T-cell (primary cell): ENCODE measurements at regions of chr18 and their contacts with region 1.

Region 1: GRCh38 chr18:63518178-63519012 is 23.8 kb upstream of the SERPINB12 start:
- DNase-seq: peak in 28 of 35 experiments; percentile 0 to 80 (median 32)
- ATAC-seq: peak; percentile 48 to 73 (median 65)
- H3K4me3 ChIP-seq: no peak overlapping the region
- H3K4me3 Mint-ChIP-seq: no peak overlapping the region
- H3K27ac ChIP-seq: no peak overlapping the region
- H3K27ac Mint-ChIP-seq: no peak overlapping the region
- H3K4me1 ChIP-seq: no peaks in the 10 kb centered on the region
- H3K4me1 Mint-ChIP-seq: peaks cover 2 to 6% (median 3%) of the 10 kb centered on the region in 3 donors
- H3K27me3 ChIP-seq: peaks cover 0 to 2% of the 10 kb centered on the region in 2 experiments
- H3K27me3 Mint-ChIP-seq: peaks cover 21 to 24% of the 10 kb centered on the region in 2 donors

Region 2: GRCh38 chr18:63487676-63488075 is 30.7 kb before region 1 on chr18:
- CTCF ChIA-PET with region 1: interaction called in 1 of 2 experiments, 11 read pairs
- POLR2A ChIA-PET with region 1: no interaction called
- DNase-seq: no peak
- ATAC-seq: no peak
- H3K4me3 ChIP-seq: no peak overlapping the region
- H3K4me3 Mint-ChIP-seq: no peak overlapping the region
- H3K27ac ChIP-seq: no peak overlapping the region
- H3K27ac Mint-ChIP-seq: no peak overlapping the region
- H3K4me1 ChIP-seq: no peaks in the 10 kb centered on the region
- H3K4me1 Mint-ChIP-seq: no peaks in the 10 kb centered on the region
- H3K27me3 ChIP-seq: peaks cover 0 to 3% of the 10 kb centered on the region in 2 experiments
- H3K27me3 Mint-ChIP-seq: peaks cover 8 to 10% of the 10 kb centered on the region in 2 donors

Region 3: DNA sequence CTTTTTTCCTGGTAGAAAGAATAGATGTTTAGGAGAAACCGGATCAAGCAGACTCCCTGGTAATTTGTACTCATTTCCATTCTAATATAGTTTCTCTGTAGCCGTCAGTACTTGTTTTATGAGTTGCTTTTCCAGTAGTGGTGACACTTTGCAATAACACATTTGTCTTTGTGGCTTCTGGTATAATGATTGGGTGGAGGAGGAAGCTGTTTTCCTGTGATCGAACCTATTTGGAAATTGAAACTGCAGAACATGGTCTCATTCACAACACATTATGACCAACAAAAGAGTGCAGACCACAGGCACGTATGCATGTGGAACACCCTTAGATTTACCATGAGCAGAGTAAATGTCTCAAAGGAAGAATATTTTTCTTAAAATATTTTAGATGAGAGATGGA is 16.2 kb after region 1 on chr18:
- CTCF ChIA-PET with region 1: interaction called in 1 of 2 experiments, 6 read pairs
- POLR2A ChIA-PET with region 1: interaction called in 1 of 2 experiments, 11 read pairs
- DNase-seq: no peak
- ATAC-seq: no peak
- H3K4me3 ChIP-seq: no peak overlapping the region
- H3K4me3 Mint-ChIP-seq: no peak overlapping the region
- H3K27ac ChIP-seq: no peak overlapping the region
- H3K27ac Mint-ChIP-seq: no peak overlapping the region
- H3K4me1 ChIP-seq: no peaks in the 10 kb centered on the region
- H3K4me1 Mint-ChIP-seq: no peaks in the 10 kb centered on the region
- H3K27me3 ChIP-seq: no peaks in the 10 kb centered on the region
- H3K27me3 Mint-ChIP-seq: peaks cover 5 to 19% of the 10 kb centered on the region in 2 donors